Mucosa of descending colon (tissue), 3 donors: ENCODE measurements at regions of chr6 and their contacts with region 1.

Region 1: DNA sequence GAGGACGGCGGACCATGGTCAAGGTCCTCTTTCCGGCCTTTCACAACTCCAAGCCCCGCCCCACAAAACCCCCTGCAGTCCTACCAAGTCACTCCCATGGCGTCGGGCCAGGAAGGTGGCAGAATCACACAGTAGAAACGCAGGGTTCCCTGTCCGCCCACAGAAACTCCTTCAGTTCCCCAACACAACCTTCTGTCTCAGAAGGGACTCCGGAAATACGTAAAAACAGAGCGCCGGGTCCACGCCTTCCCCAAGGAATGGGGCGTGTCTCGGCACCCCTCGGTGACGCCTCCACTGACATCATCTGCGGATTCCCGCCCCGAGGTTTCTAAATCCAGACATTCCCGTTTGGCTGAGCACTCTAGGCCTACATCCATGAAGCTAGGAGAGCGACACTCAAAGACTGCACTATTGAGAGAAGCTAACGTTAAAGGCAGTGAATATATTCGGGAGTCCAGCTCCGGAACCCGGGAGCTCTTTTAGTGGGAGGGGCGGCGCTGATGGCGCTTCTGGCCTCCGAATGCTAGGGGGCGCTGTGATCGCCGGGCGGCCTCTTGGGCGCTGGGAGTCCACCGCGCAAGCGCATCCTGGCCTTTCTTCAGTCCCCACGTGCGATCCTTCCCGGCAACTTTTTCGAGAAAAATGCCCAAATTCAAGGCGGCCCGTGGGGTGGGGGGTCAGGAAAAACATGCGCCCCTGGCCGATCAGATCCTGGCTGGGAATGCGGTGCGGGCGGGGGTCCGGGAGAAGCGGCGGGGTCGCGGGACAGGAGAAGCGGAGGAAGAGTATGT is at the starts of genes BYSL and MED20:
- DNase-seq: peak; percentile 94 to 97 (median 96)
- ATAC-seq: peak; percentile 98
- H3K4me3 ChIP-seq: peak within 1 kb of the TSS; percentile 67
- H3K4me1 ChIP-seq: peaks cover 22% of the 10 kb centered on the region
- CTCF ChIP-seq: peak; percentile 96
- total RNA-seq, gene BYSL: 7.5 to 10.5 (median 10.2) TPM
- total RNA-seq, gene MED20: 15.5 to 21.2 (median 18.6) TPM

Region 2: GRCh38 chr6:41787219-41787917 is 133.7 kb before region 1 on chr6 and contains the start of gene TOMM6:
- intact Hi-C with region 1: loop called (anchors 10 kb)
- DNase-seq: peak; percentile 98
- ATAC-seq: peak; percentile 94
- H3K4me3 ChIP-seq: peak within 1 kb of the TSS; percentile 67
- H3K4me1 ChIP-seq: peaks cover 16% of the 10 kb centered on the region
- CTCF ChIP-seq: peak; percentile 92
- total RNA-seq, gene TOMM6: 96.9 to 116 (median 96.9) TPM

Region 3: DNA sequence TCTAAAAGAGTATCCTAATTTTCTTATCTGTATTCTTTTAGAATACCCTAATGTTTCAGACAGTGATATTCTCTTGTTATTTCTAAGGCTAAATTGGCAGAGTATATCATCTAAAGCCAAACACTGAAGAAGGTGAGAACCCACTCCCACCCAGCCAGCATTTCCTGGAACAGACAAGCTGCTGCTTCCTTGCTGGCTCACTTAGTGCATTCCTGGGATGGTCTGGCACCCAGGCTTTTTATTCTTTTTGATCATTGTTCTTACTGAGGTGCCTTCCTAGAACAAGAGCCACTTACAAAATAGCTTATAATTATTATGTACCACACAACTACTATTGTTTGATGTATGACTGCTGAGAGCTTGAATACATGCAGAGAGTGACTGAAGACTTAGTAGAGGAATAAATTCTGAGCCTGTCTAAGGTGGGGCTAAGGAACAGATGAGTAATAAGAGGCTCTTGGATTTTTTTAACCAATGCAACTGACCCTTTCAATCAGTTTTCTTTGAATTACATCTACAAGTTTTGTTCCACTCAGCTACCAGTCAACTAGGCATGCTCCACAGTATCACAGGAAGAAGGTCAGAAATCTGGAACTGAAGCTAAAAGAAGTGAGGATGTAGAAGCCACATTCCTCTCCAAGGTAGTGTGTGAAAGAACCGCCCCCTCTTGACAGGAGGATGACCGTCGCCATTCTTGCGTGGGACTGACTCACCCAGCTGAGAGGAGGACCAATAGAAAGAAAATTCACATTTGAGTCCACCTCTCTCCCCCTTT is 771.2 kb after region 1 on chr6:
- intact Hi-C with region 1: no loop called
- DNase-seq: no peak
- ATAC-seq: no peak
- H3K4me3 ChIP-seq: no peak overlapping the region
- H3K4me1 ChIP-seq: no peaks in the 10 kb centered on the region
- CTCF ChIP-seq: no peak